Activated CD4-positive, alpha-beta T cell treated with anti-CD3 and anti-CD28 coated beads for 36 hours (primary cell): ENCODE measurements at regions of chr3 and their contacts with region 1.

Region 1: DNA sequence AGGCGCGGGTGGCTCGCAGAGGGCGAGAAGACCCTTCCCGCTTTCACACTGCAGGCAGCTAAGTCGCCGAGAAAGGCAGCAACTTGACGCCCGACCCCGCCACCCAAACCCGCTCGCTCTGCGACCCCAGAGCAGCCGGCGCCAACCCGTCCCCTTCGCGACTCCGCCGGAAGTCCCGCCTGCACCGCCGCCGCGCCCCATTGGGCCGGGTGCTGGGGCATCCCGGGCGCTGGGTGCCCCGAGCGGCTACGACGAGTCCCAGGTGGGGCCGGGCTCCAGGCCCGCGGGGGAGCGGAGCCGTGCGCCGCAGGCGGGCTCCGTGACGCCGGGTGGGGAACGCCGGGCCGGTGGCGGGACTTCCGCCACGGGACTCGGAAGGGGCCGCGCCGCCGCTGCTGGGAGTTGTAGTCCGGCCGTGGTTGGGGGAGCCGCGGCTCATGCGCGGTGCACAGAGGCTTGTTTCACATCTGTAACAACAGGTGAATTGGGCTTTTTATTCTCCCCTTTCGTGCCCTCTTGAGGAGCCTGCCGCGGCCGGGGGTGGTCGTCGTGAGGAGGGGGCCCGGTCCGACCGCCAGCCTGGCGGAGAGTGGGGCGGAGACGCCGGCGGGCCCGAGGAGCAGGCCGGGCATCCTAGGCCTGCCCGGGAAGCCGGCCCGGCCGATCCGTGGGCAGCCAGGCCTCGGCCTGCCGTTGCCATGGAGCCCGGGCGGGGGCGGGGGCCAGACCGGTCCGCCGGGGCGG is at the start of gene DHX30:
- DNase-seq: peak; percentile 93
- ATAC-seq: peak; percentile 92
- H3K4me3 Mint-ChIP-seq: peak within 1 kb of the TSS; percentile 96
- H3K27ac Mint-ChIP-seq: peak within 1 kb of the TSS; percentile 98
- H3K4me1 Mint-ChIP-seq: peaks cover 24% of the 10 kb centered on the region
- H3K27me3 Mint-ChIP-seq: no peaks in the 10 kb centered on the region
- total RNA-seq, gene DHX30: 81.6 to 82.3 TPM

Region 2: DNA sequence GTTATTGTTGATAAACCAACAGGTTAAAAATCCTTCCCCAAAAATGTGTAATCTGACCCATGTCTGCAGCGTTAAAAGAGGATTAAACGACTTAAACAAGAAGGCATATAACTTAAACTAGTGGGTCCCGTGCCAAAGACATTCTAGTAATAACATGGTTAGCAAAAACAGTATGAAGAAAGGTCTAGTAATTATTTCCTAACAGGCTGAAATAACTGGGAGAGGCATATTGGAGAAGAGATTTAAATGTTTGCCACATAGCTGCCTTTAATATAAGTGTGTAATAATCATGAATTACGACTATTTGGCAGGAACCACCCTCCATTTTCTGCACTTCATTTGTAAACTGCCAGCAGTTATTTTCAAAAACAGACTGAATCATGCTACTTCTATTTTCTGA is 156.5 kb before region 1 on chr3:
- CTCF ChIA-PET with region 1: no interaction called
- POLR2A ChIA-PET with region 1: no interaction called
- intact Hi-C with region 1: no loop called
- DNase-seq: no peak
- ATAC-seq: no peak
- H3K4me3 Mint-ChIP-seq: no peak overlapping the region
- H3K27ac Mint-ChIP-seq: no peak overlapping the region
- H3K4me1 Mint-ChIP-seq: no peaks in the 10 kb centered on the region
- H3K27me3 Mint-ChIP-seq: no peaks in the 10 kb centered on the region

Region 3: DNA sequence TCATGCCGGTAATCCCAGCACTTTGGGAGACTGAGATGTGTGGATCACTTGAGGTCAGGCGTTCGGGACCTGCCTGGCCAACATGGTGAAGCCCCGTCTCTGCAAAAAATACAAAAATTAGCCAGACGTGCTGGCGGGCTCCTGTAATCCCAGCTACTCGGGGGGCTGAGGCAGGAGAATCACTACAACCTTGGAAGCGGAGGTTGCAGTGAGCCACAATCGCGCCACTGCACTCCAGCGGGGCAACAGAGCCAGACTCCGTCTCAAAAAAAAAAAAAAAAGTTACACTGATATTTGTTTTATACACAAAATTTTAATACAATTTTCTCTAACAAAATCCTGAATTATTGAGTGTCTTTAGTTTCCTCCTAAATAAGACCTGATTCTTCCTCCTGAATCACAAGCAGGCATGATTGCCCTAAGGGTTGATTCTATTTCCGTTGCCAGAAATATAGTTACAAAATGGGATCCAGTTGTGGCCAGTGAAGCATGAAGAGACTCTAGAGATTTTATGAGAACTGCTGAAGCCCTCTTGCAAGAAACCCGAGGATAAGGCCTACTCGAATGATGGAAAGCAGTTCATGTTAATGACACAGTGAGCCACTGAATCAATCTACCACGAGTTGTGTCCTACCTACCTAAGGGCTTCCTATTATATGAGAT is 11.6 kb before region 1 on chr3:
- CTCF ChIA-PET with region 1: no interaction called
- POLR2A ChIA-PET with region 1: no interaction called
- intact Hi-C with region 1: loop called in 1 of 2 experiments (anchors 1 kb)
- DNase-seq: no peak
- ATAC-seq: no peak
- H3K4me3 Mint-ChIP-seq: no peak overlapping the region
- H3K27ac Mint-ChIP-seq: no peak overlapping the region
- H3K4me1 Mint-ChIP-seq: peaks cover 2% of the 10 kb centered on the region
- H3K27me3 Mint-ChIP-seq: no peaks in the 10 kb centered on the region

Region 4: DNA sequence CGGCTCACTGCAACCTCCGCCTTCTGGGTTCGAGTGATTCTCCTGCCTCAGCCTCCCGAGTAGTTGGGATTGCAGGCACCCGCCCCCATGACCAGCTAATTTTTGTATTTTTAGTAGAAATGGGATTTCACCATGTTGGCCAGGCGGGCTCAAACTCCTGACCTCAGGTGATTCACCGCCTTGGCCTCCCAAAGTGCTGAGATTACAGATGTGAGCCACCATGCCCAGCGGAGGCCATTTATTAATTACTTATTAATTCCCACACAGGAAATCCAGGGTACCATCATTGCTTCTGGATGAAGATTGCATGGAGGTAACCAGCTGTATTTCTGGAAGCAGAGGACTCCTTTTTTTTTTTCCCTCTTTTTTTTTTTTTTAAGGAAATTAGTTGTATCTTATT is 175.5 kb after region 1 on chr3:
- CTCF ChIA-PET with region 1: no interaction called
- POLR2A ChIA-PET with region 1: no interaction called
- intact Hi-C with region 1: no loop called
- DNase-seq: no peak
- ATAC-seq: no peak
- H3K4me3 Mint-ChIP-seq: no peak overlapping the region
- H3K27ac Mint-ChIP-seq: no peak overlapping the region
- H3K4me1 Mint-ChIP-seq: no peaks in the 10 kb centered on the region
- H3K27me3 Mint-ChIP-seq: no peaks in the 10 kb centered on the region